ENCODE measurements at regions of chr4 and their contacts with region 1.

Region 1: GRCh38 chr4:48127682-48128394 is 6.2 kb downstream of the TXK start:
- DNase-seq: peak; percentile 59 to 81 (median 69)
- H3K4me3 ChIP-seq: peak overlapping the region in 1 of 4 donors; percentile 31
- H3K27ac ChIP-seq: peak overlapping the region in 2 of 5 donors; percentile 44 to 59
- H3K4me1 ChIP-seq: peaks cover 5 to 11% of the 10 kb centered on the region in 2 donors
- H3K27me3 ChIP-seq: no peaks in the 10 kb centered on the region
- CTCF ChIP-seq: peak; percentile 18 to 72 (median 62)
- POLR2A ChIP-seq: no peak

Region 2: DNA sequence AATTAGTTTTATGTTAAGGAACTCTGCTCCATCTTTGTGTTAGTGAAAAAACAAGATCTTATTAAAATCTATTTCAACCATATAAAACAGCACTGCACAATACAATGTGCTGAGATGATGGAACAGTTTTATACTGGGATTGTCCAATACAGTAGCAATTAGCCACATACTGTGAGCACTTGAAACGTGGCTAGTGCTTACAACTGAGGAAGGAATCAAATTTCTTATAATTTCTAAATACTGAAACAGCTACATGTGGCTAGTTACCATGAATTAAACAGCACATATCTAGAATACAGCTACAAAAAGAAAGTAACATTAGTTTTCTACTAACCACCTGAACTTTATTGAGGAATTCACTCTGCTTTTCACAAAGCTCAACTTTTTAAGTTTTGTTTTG is 228.2 kb before region 1 on chr4:
- intact Hi-C with region 1: no loop called
- DNase-seq: no peak
- H3K4me3 ChIP-seq: no peak overlapping the region
- H3K27ac ChIP-seq: no peak overlapping the region
- H3K4me1 ChIP-seq: no peaks in the 10 kb centered on the region
- H3K27me3 ChIP-seq: no peaks in the 10 kb centered on the region
- CTCF ChIP-seq: no peak
- POLR2A ChIP-seq: no peak

Region 3: DNA sequence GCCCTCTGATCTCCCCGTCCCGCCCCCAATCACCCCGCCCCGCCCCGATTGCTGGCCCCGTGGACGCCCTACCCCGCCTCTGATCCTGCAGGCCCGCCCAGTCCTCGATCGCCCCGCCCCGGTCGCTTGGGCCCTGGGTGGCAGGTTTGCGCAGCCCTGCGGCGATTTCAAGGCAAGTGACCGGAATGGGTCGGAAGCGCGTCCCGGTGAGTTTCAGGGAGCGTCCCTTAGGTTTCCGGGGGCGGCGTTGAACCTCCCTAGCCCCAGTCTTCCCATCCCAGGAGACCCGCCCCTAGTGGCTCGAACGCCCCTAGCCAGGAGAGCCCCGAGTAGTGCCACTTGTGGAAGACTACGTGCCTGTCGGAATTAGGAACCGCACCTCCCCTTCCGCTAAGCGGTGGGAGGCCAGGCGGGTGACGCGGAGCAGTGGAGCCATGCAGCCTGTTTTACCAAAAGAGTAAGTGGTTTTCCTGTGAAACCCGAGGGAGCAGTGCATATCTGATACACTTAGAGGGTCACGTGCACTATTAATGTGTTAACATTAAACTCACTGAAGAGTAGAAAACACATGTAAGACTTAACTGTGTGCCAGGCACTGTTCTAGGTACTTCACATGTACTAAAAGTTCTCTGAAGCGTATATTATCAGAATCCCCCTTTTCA is 142.2 kb after region 1 on chr4:
- intact Hi-C with region 1: loop called (anchors 10 kb)
- DNase-seq: peak; percentile 95 to 97 (median 96)
- H3K4me3 ChIP-seq: peak overlapping the region in 3 of 4 donors; percentile 73 to 92 (median 83)
- H3K27ac ChIP-seq: peak overlapping the region; percentile 85 to 96 (median 91)
- H3K4me1 ChIP-seq: peaks cover 5 to 8% of the 10 kb centered on the region in 2 donors
- H3K27me3 ChIP-seq: no peaks in the 10 kb centered on the region
- CTCF ChIP-seq: peak in 4 of 6 experiments; percentile 10 to 41 (median 21)
- POLR2A ChIP-seq: peak in 1 of 2 donors; percentile 74